HEK293 (cell line): ENCODE measurements at regions of chrX and their contacts with region 1.

Region 1: DNA sequence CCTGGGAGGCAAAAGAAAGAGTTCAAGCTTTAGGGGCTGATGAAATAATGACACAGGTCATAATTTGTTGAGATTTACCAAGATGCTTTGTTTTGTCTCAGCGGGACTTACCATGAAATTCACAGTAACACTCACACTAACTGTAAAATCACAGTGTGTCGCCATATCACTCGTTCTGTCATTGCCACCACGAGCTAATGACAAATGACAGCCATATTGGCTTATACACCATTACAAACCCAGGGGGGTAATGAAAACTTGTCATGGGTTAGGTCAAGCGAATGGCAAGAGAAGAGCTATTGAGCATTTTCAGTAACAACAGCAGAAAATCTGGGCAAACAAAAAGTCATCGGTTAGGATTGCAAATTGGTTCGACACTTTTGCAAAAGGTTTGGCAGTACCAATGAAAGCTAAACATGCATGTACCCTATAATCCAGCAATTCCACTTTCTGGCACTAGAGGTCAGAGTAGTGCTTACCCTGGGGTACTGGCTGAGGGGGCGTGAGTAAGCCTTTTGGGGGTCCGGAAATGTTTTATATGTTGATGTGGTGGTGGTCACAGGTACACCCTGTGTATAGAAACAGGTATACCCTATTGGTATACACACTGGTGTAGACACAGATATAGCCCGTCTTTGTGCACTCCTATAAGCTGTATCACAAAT is 83.9 kb upstream of the RAI2 start:
- H3K4me3 ChIP-seq: no peak overlapping the region
- H3K27ac ChIP-seq: no peak overlapping the region
- H3K4me1 ChIP-seq: no peaks in the 10 kb centered on the region
- CTCF ChIP-seq: no peak

Region 2: GRCh38 chrX:17542123-17542522 is 402.8 kb before region 1 on chrX:
- CTCF ChIA-PET with region 1: no interaction called
- POLR2A ChIA-PET with region 1: no interaction called
- H3K4me3 ChIP-seq: no peak overlapping the region
- H3K27ac ChIP-seq: no peak overlapping the region
- H3K4me1 ChIP-seq: no peaks in the 10 kb centered on the region; the same call in 1 of the 2 replicates
- CTCF ChIP-seq: no peak

Region 3: GRCh38 chrX:17703201-17703600 is 241.8 kb before region 1 on chrX:
- CTCF ChIA-PET with region 1: no interaction called
- POLR2A ChIA-PET with region 1: no interaction called
- H3K4me3 ChIP-seq: no peak overlapping the region
- H3K27ac ChIP-seq: no peak overlapping the region
- H3K4me1 ChIP-seq: no peaks in the 10 kb centered on the region
- CTCF ChIP-seq: no peak

Region 4: GRCh38 chrX:17930850-17931249 is 14.1 kb before region 1 on chrX:
- CTCF ChIA-PET with region 1: interaction called, 22 read pairs
- POLR2A ChIA-PET with region 1: no interaction called
- H3K4me3 ChIP-seq: no peak overlapping the region
- H3K27ac ChIP-seq: no peak overlapping the region
- H3K4me1 ChIP-seq: no peaks in the 10 kb centered on the region
- CTCF ChIP-seq: peak; percentile 35; the same call in 1 of the 2 replicates

Region 5: DNA sequence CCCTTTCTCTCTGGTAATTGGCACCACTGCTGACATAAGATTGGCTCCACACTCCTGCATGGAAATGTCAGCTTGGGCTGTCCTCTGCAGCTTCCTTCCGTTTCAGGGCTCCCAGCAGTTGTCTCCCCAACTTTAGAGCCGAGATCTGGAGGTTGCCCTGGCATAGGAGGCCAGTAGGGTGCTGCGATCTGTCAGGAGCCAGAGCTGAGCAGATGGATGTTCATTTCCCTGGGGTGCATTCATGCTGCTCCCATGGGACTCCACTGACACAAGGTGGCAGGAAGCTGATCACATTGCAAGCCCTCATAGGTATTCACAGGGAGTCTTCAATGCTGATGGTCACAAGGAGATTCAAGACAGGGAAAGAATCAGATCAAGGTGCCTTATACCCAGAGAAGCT is 32.7 kb after region 1 on chrX:
- CTCF ChIA-PET with region 1: no interaction called
- POLR2A ChIA-PET with region 1: no interaction called
- H3K4me3 ChIP-seq: no peak overlapping the region
- H3K27ac ChIP-seq: no peak overlapping the region
- H3K4me1 ChIP-seq: no peaks in the 10 kb centered on the region
- CTCF ChIP-seq: no peak

Region 6: GRCh38 chrX:18210470-18210869 is 265.5 kb after region 1 on chrX:
- CTCF ChIA-PET with region 1: interaction called, 14 read pairs
- POLR2A ChIA-PET with region 1: no interaction called
- H3K4me3 ChIP-seq: no peak overlapping the region
- H3K27ac ChIP-seq: no peak overlapping the region
- H3K4me1 ChIP-seq: no peaks in the 10 kb centered on the region
- CTCF ChIP-seq: no peak